ENCODE measurements at regions of chr15 and their contacts with region 1.

Region 1: DNA sequence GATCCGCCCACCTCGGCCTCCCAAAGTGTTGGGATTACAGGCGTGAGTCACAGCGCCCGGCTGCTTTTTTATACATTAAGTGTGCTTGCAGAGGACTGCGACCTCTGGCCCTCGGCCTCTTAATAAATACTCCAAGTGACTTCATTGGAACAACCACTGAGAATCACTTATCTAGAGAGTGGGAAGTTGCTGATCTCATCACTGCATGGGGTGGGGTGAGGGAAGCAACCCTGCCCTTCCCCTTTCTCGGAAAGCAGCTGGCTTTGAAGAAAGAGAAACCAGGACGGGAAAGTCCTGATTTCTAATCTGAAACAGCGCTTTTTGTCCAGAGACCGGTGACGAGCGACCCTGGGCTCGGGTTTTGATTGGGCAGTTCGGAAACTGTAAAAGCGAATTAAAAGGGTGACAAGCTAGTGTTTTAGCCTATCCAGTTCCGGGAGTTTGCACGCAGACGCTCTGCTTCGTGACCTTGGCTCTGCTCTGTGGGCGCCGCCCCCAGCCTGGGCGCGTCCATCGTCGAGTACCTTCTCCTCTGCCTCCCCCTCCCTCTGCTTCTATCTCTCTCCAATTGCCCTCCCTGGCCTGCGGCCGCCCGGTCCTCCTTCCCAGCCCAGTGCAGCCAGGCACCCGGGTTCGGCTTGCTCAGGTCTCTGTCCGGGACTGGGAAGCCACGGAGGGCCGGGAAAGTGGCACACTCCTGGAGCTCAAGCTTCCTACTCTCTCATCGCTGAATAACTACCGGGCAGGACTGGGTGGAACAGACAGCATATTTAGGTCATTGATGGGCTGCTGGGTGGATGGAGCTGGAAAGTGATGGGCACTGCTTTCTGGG is 7.5 kb upstream of the TRIM69 start:
- DNase-seq: peak; percentile 98
- H3K4me3 ChIP-seq: peak overlapping the region; percentile 53 to 90 (median 77)
- H3K27ac ChIP-seq: peak overlapping the region; percentile 95 to 99 (median 98)
- H3K4me1 ChIP-seq: peaks cover 0 to 39% (median 33%) of the 10 kb centered on the region in 4 donors
- H3K27me3 ChIP-seq: no peaks in the 10 kb centered on the region
- CTCF ChIP-seq: no peak
- EP300 ChIP-seq: peak in 3 of 4 donors; percentile 53 to 81 (median 65)
- POLR2A ChIP-seq: peak; percentile 87 to 95

Region 2: DNA sequence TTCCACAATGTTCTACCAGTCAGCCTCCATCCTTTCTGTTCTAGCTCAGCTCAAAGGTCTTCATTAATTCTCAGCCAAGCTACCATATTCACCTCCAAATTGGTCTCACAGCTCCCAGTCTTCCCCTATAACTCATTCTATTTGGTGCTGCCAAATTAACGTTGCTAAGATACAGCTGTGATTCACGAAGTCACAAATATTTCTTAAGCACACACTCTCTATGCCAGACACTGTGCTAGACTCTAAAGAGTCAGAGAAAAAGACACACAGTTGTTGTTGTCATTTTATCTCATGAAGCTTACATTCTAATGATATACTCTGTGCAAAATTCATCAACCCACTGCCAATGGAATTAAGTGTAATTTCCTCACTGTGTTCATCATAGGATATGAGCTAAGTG is 636.6 kb before region 1 on chr15:
- intact Hi-C with region 1: no loop called
- DNase-seq: no peak
- H3K4me3 ChIP-seq: no peak overlapping the region
- H3K27ac ChIP-seq: no peak overlapping the region
- H3K4me1 ChIP-seq: peaks cover 0 to 20% (median 4%) of the 10 kb centered on the region in 4 donors
- H3K27me3 ChIP-seq: no peaks in the 10 kb centered on the region
- CTCF ChIP-seq: no peak
- EP300 ChIP-seq: no peak
- POLR2A ChIP-seq: no peak

Region 3: DNA sequence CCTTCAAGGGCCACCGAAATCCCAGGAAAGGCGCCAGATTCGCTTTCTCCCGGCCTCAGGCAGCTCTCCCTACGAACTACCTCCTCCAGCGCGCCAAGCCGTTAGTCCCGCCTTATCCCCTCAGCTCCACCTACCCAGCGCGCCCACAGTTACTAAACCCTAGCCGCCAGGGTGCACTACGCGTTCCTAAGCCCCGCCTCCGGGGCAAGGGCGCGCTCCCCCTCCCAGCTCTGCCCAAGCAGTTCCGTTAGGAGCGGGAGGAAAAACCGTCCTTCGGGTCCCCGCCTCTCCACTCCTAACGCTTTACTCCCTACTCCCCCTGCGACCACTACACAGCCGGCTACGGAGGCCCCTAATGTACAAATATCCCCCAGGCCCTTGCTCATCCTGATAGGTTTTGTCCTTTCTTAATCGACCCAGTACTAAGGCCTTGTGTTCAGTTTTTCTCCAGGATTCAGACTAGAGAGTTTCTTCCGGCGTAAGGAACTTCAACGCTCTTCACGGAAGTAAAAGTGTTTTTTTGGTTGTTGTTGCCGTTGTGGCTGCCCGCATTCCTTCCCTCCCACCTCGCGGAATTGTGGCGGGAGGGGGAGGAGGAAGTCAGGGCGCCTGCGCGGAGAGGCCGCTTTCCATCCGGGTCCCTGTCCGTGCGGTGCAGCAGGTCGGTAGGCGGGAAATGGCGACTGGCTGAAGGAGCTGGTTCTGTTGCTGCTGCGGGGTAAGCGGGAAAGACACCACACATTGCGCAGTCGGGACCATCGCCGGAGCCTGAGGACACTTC is 301.6 kb before region 1 on chr15 and contains the start of gene CTDSPL2:
- intact Hi-C with region 1: loop called (anchors 10 kb)
- DNase-seq: peak; percentile 99
- H3K4me3 ChIP-seq: peak within 1 kb of the TSS; percentile 66 to 89 (median 82)
- H3K27ac ChIP-seq: peak within 1 kb of the TSS; percentile 92 to 95 (median 94)
- H3K4me1 ChIP-seq: peaks cover 0 to 33% (median 26%) of the 10 kb centered on the region in 4 donors
- H3K27me3 ChIP-seq: no peaks in the 10 kb centered on the region
- CTCF ChIP-seq: peak in 2 of 4 experiments; percentile 14 to 19
- EP300 ChIP-seq: no peak
- POLR2A ChIP-seq: peak; percentile 29 to 55
- total RNA-seq, gene CTDSPL2: 25.4 to 57.8 (median 44.9) TPM

Region 4: GRCh38 chr15:44536962-44537734 is 191.6 kb before region 1 on chr15 and contains the start of gene EIF3J:
- intact Hi-C with region 1: loop called (anchors 5 kb)
- DNase-seq: peak; percentile 98
- H3K4me3 ChIP-seq: peak within 1 kb of the TSS; percentile 80 to 100 (median 90)
- H3K27ac ChIP-seq: peak within 1 kb of the TSS; percentile 95 to 99 (median 98)
- H3K4me1 ChIP-seq: peaks cover 0 to 53% (median 47%) of the 10 kb centered on the region in 4 donors
- H3K27me3 ChIP-seq: no peaks in the 10 kb centered on the region
- CTCF ChIP-seq: no peak
- EP300 ChIP-seq: no peak
- POLR2A ChIP-seq: peak; percentile 26 to 57
- total RNA-seq, gene EIF3J: 50.4 to 92.0 (median 56.7) TPM

Region 5: GRCh38 chr15:44711356-44712107 is 17.3 kb before region 1 on chr15 and contains the start of gene B2M:
- intact Hi-C with region 1: loop called (anchors 2 kb)
- DNase-seq: peak; percentile 98
- H3K4me3 ChIP-seq: peak within 1 kb of the TSS; percentile 72 to 91 (median 84)
- H3K27ac ChIP-seq: peak within 1 kb of the TSS; percentile 96 to 99 (median 98)
- H3K4me1 ChIP-seq: peaks cover 0 to 42% (median 24%) of the 10 kb centered on the region in 4 donors
- H3K27me3 ChIP-seq: no peaks in the 10 kb centered on the region
- CTCF ChIP-seq: no peak
- EP300 ChIP-seq: no peak
- POLR2A ChIP-seq: peak; percentile 100
- total RNA-seq, gene B2M: 1,906 to 2,799 (median 2,534) TPM

Region 6: GRCh38 chr15:44769521-44769920 is 40.7 kb after region 1 on chr15:
- intact Hi-C with region 1: no loop called
- DNase-seq: no peak
- H3K4me3 ChIP-seq: no peak overlapping the region
- H3K27ac ChIP-seq: no peak overlapping the region
- H3K4me1 ChIP-seq: no peaks in the 10 kb centered on the region
- H3K27me3 ChIP-seq: no peaks in the 10 kb centered on the region
- CTCF ChIP-seq: no peak
- EP300 ChIP-seq: no peak
- POLR2A ChIP-seq: no peak

Measured in sigmoid colon (tissue), 7 donors.